ENCODE measurements at regions of chr2 and their contacts with region 1.

Region 1: GRCh38 chr2:64644177-64645004 is 9.3 kb downstream of the SERTAD2 start:
- DNase-seq: peak; percentile 84
- H3K4me3 ChIP-seq: peak overlapping the region; percentile 3 to 53 (median 30)
- H3K27ac ChIP-seq: peak overlapping the region; percentile 87
- H3K4me1 ChIP-seq: peaks cover 29% of the 10 kb centered on the region
- H3K27me3 ChIP-seq: no peaks in the 10 kb centered on the region
- CTCF ChIP-seq: no peak
- POLR2A ChIP-seq: no peak

Region 2: GRCh38 chr2:64052468-64053241 is 591.7 kb before region 1 on chr2:
- CTCF ChIA-PET with region 1: interaction called, 4 read pairs
- POLR2A ChIA-PET with region 1: no interaction called
- dilution Hi-C with region 1: no loop called
- intact Hi-C with region 1: loop called (anchors 1 kb)
- DNase-seq: peak; percentile 94
- H3K4me3 ChIP-seq: peak overlapping the region in 1 of 3 experiments; percentile 20
- H3K27ac ChIP-seq: peak overlapping the region; percentile 96
- H3K4me1 ChIP-seq: peaks cover 28% of the 10 kb centered on the region
- H3K27me3 ChIP-seq: no peaks in the 10 kb centered on the region
- CTCF ChIP-seq: no peak
- POLR2A ChIP-seq: no peak

Region 3: GRCh38 chr2:64595397-64596160 is 48.8 kb before region 1 on chr2:
- CTCF ChIA-PET with region 1: interaction called, 11 read pairs
- POLR2A ChIA-PET with region 1: no interaction called
- dilution Hi-C with region 1: no loop called
- intact Hi-C with region 1: no loop called
- DNase-seq: no peak
- H3K4me3 ChIP-seq: no peak overlapping the region
- H3K27ac ChIP-seq: no peak overlapping the region
- H3K4me1 ChIP-seq: peaks cover 5% of the 10 kb centered on the region
- H3K27me3 ChIP-seq: no peaks in the 10 kb centered on the region
- CTCF ChIP-seq: no peak
- POLR2A ChIP-seq: no peak

Region 4: GRCh38 chr2:64632835-64633819 is 11.3 kb before region 1 on chr2:
- CTCF ChIA-PET with region 1: interaction called, 13 read pairs
- POLR2A ChIA-PET with region 1: no interaction called
- dilution Hi-C with region 1: no loop called
- intact Hi-C with region 1: no loop called
- DNase-seq: no peak
- H3K4me3 ChIP-seq: no peak overlapping the region
- H3K27ac ChIP-seq: no peak overlapping the region
- H3K4me1 ChIP-seq: peaks cover 4% of the 10 kb centered on the region
- H3K27me3 ChIP-seq: no peaks in the 10 kb centered on the region
- CTCF ChIP-seq: no peak
- POLR2A ChIP-seq: no peak

Region 5: DNA sequence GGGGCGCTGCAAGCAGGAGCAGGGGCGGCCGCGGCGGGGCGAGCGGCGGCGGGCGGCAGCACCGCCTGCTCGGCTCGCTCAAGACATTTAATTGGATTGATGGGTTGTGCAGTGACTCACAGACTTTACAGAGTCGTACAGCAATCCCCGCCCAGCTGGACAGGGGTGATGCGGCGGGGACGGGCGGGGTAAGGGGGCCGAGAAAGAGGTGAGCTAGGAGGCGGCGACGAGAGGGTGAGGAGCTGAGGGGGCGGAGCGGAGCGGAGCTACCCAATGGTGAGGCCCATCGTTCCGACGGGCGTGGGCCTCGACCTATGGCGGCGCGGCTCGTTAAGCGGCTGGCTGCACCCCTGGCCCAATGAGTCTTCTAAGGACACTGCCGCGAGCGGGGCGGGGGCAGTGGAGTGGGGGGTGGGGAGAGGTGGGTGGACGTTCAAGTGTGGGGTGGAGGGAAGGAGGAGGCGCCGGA is 106.5 kb after region 1 on chr2:
- CTCF ChIA-PET with region 1: interaction called, 72 read pairs
- POLR2A ChIA-PET with region 1: interaction called, 5 read pairs
- dilution Hi-C with region 1: no loop called
- intact Hi-C with region 1: loop called (anchors 1 kb)
- DNase-seq: peak; percentile 100
- H3K4me3 ChIP-seq: peak overlapping the region; percentile 74 to 96 (median 87)
- H3K27ac ChIP-seq: peak overlapping the region; percentile 83
- H3K4me1 ChIP-seq: peaks cover 17% of the 10 kb centered on the region
- H3K27me3 ChIP-seq: no peaks in the 10 kb centered on the region
- CTCF ChIP-seq: no peak
- POLR2A ChIP-seq: peak; percentile 95

Region 6: GRCh38 chr2:64831134-64831976 is 187.0 kb after region 1 on chr2:
- CTCF ChIA-PET with region 1: interaction called, 46 read pairs
- POLR2A ChIA-PET with region 1: interaction called, 3 read pairs
- dilution Hi-C with region 1: no loop called
- intact Hi-C with region 1: loop called (anchors 1 kb)
- DNase-seq: peak; percentile 91
- H3K4me3 ChIP-seq: no peak overlapping the region
- H3K27ac ChIP-seq: peak overlapping the region; percentile 86
- H3K4me1 ChIP-seq: peaks cover 20% of the 10 kb centered on the region
- H3K27me3 ChIP-seq: no peaks in the 10 kb centered on the region
- CTCF ChIP-seq: peak; percentile 88 to 93
- POLR2A ChIP-seq: peak; percentile 19

Region 7: GRCh38 chr2:65396348-65397026 is 752.1 kb after region 1 on chr2:
- CTCF ChIA-PET with region 1: no interaction called
- POLR2A ChIA-PET with region 1: no interaction called
- dilution Hi-C with region 1: no loop called
- intact Hi-C with region 1: no loop called
- DNase-seq: no peak
- H3K4me3 ChIP-seq: no peak overlapping the region
- H3K27ac ChIP-seq: no peak overlapping the region
- H3K4me1 ChIP-seq: no peaks in the 10 kb centered on the region
- H3K27me3 ChIP-seq: peaks cover 25 to 48% of the 10 kb centered on the region in 2 experiments
- CTCF ChIP-seq: no peak
- POLR2A ChIP-seq: no peak

Region 8: DNA sequence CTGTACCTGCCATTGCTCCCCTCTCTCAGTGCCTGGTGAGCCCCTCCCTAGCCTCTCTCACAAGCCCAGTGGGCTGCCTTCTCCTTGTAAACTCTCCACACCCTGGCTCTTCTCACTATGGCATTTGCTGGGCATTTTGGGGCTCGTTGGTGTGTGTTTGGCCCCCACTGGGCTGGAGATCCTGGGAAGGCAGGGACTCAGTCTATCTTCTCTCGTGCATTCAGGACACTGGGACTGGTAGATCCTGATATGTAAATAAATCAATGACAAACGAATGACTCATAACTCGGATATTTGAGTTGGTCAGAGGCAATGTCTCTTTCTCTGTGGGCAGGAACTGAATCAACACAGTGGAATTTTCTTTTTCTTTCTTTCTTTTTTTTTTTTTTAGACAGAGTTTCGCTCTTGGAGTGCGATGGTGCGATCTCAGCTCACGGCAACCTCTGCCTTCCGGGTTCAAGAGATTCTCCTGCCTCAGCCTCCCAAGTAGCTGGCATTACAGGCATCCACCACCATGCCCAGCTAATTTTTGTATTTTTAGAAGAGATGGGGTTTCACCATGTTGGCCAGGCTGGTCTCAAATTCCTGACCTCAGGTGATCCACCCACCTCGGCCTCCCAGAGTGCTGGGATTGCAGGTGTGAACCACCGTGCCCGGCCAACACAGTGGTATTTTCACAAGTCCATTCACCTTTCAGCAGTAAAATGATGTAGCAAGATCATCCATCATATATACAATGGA is 932.6 kb after region 1 on chr2:
- CTCF ChIA-PET with region 1: interaction called, 4 read pairs
- POLR2A ChIA-PET with region 1: no interaction called
- dilution Hi-C with region 1: no loop called
- intact Hi-C with region 1: loop called (anchors 2 kb)
- DNase-seq: peak; percentile 87
- H3K4me3 ChIP-seq: no peak overlapping the region
- H3K27ac ChIP-seq: peak overlapping the region; percentile 88
- H3K4me1 ChIP-seq: peaks cover 19% of the 10 kb centered on the region
- H3K27me3 ChIP-seq: no peaks in the 10 kb centered on the region
- CTCF ChIP-seq: no peak
- POLR2A ChIP-seq: no peak